Sciatic nerve (tissue), 2 donors: ENCODE measurements at regions of chr1 and their contacts with region 1.

Region 1: DNA sequence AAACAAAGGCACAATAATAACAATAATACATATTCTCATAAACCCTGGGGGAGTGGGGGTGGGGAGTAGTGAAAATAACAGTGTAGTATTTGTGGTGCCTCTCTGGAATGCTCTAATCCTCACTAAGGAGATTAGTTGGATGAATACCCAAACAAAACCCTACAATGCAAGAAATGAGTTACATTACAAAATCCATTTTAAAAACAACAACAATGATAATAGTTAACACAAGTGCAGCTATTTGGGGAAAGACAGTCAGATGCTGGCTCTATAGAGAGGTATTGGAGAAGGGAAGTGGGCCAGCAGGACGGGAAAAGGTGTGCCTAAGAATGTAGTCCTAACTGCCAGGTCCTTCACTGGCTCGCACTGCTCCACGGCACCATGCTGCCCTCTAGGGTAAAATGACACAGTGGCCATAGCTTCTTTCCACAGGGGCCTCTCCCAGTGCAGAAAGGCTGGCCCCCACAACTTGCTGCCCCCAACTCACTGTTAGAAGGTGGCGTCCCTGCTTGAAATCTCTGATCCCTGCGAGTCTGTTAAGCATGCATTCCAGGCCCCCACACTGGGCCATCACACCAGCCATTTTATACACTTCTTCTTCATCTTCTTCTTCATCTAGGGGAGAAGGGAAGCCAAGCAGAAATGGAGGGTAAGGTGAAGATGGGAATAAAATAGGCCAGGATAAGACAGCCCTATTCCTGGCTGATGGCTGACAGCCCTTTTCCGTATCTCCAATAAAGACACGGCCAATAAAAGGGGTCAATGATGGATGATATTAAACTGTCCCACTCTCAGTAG is 113.8 kb downstream of the UBR4 start:
- DNase-seq: no peak
- ATAC-seq: peak; percentile 64

Region 2: GRCh38 chr1:18913065-18913835 is 183.0 kb before region 1 on chr1:
- intact Hi-C with region 1: loop called (anchors 10 kb)
- DNase-seq: peak; percentile 84
- ATAC-seq: peak; percentile 77

Region 3: GRCh38 chr1:19596714-19597495 is 500.7 kb after region 1 on chr1:
- intact Hi-C with region 1: no loop called
- DNase-seq: peak; percentile 98
- ATAC-seq: peak; percentile 97